Activated B cell treated with CpG ODN at 0.5 μM for 24 hours (primary cell): ENCODE measurements at regions of chr10 and their contacts with region 1.

Region 1: GRCh38 chr10:124741281-124741921 is 2.8 kb downstream of the FAM53B start:
- DNase-seq: peak; percentile 67
- ATAC-seq: peak; percentile 54
- H3K4me3 Mint-ChIP-seq: peak overlapping the region; percentile 97
- H3K27ac Mint-ChIP-seq: peak overlapping the region; percentile 97
- H3K4me1 Mint-ChIP-seq: peaks cover 75% of the 10 kb centered on the region
- H3K27me3 Mint-ChIP-seq: no peaks in the 10 kb centered on the region
- CTCF ChIP-seq: peak; percentile 41

Region 2: GRCh38 chr10:124403548-124403947 is 337.9 kb before region 1 on chr10:
- CTCF ChIA-PET with region 1: interaction called, 12 read pairs
- POLR2A ChIA-PET with region 1: no interaction called
- intact Hi-C with region 1: loop called (anchors 1 kb)
- DNase-seq: no peak
- ATAC-seq: peak; percentile 100
- H3K4me3 Mint-ChIP-seq: no peak overlapping the region
- H3K27ac Mint-ChIP-seq: peak overlapping the region; percentile 59
- H3K4me1 Mint-ChIP-seq: peaks cover 9% of the 10 kb centered on the region
- H3K27me3 Mint-ChIP-seq: no peaks in the 10 kb centered on the region
- CTCF ChIP-seq: no peak

Region 3: GRCh38 chr10:124539935-124540641 is 201.3 kb before region 1 on chr10:
- CTCF ChIA-PET with region 1: interaction called, 307 read pairs
- POLR2A ChIA-PET with region 1: interaction called, 134 read pairs
- intact Hi-C with region 1: loop called (anchors 1 kb)
- DNase-seq: peak; percentile 71
- ATAC-seq: peak; percentile 66
- H3K4me3 Mint-ChIP-seq: peak overlapping the region; percentile 50
- H3K27ac Mint-ChIP-seq: peak overlapping the region; percentile 82
- H3K4me1 Mint-ChIP-seq: peaks cover 89% of the 10 kb centered on the region
- H3K27me3 Mint-ChIP-seq: no peaks in the 10 kb centered on the region
- CTCF ChIP-seq: no peak

Region 4: GRCh38 chr10:124619195-124619594 is 122.2 kb before region 1 on chr10:
- CTCF ChIA-PET with region 1: interaction called, 24 read pairs
- POLR2A ChIA-PET with region 1: interaction called, 63 read pairs
- intact Hi-C with region 1: loop called (anchors 2 kb)
- DNase-seq: no peak
- ATAC-seq: peak; percentile 72
- H3K4me3 Mint-ChIP-seq: peak overlapping the region; percentile 69
- H3K27ac Mint-ChIP-seq: peak overlapping the region; percentile 96
- H3K4me1 Mint-ChIP-seq: peaks cover 99% of the 10 kb centered on the region
- H3K27me3 Mint-ChIP-seq: no peaks in the 10 kb centered on the region
- CTCF ChIP-seq: no peak

Region 5: GRCh38 chr10:124671486-124672075 is 69.8 kb before region 1 on chr10:
- CTCF ChIA-PET with region 1: interaction called, 12 read pairs
- POLR2A ChIA-PET with region 1: interaction called, 3 read pairs
- intact Hi-C with region 1: no loop called
- DNase-seq: no peak
- ATAC-seq: no peak
- H3K4me3 Mint-ChIP-seq: no peak overlapping the region
- H3K27ac Mint-ChIP-seq: peak overlapping the region; percentile 80
- H3K4me1 Mint-ChIP-seq: peaks cover 72% of the 10 kb centered on the region
- H3K27me3 Mint-ChIP-seq: no peaks in the 10 kb centered on the region
- CTCF ChIP-seq: no peak

Region 6: GRCh38 chr10:124719213-124719851 is 22.1 kb before region 1 on chr10:
- CTCF ChIA-PET with region 1: interaction called, 178 read pairs
- POLR2A ChIA-PET with region 1: interaction called, 312 read pairs
- intact Hi-C with region 1: loop called (anchors 1 kb)
- DNase-seq: no peak
- ATAC-seq: peak; percentile 43
- H3K4me3 Mint-ChIP-seq: peak overlapping the region; percentile 69
- H3K27ac Mint-ChIP-seq: peak overlapping the region; percentile 93
- H3K4me1 Mint-ChIP-seq: peaks cover 98% of the 10 kb centered on the region
- H3K27me3 Mint-ChIP-seq: no peaks in the 10 kb centered on the region
- CTCF ChIP-seq: no peak

Region 7: DNA sequence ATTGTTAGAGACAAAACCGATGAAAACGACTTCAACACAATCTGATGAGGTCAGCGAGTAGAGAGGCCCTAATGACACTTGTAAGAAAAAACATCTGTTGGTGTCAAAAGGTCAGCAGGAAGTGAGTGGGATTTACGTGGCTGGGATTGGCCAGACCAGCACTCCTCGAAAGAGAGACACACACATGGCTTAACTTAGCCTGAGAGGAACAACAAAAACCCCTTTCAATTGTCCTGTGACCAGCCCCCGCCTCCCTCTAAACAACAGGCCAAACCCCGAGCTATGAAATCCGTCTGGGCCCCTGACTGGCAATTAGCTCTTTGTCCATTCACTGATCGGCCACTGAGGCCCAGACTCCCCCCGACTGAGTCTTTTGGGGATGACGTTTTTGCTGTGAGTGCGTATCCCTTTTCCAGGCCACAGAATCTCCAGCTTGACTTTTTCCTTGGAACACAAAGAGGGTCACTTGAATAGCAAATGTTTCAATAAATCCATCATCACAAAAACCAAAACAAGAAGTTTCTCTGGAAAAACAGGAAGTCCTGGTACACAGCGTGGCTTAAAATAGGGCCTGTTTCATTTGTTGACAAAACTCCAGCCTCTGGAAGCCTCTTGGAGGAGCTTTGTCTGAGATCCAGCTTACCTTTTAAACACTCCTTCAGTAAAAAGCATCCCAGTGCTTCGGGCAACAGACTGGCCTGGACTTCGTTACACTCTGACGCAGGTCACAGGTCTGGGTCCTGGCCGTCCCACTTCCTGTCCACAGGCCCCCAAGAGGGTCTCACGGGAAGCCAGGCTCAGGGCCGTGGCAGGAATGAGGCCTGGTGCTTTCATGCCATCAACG is 316.0 kb after region 1 on chr10:
- CTCF ChIA-PET with region 1: no interaction called
- POLR2A ChIA-PET with region 1: no interaction called
- intact Hi-C with region 1: no loop called
- DNase-seq: no peak
- ATAC-seq: no peak
- H3K4me3 Mint-ChIP-seq: no peak overlapping the region
- H3K27ac Mint-ChIP-seq: no peak overlapping the region
- H3K4me1 Mint-ChIP-seq: peaks cover 17% of the 10 kb centered on the region
- H3K27me3 Mint-ChIP-seq: peaks cover 70% of the 10 kb centered on the region
- CTCF ChIP-seq: no peak

Region 8: DNA sequence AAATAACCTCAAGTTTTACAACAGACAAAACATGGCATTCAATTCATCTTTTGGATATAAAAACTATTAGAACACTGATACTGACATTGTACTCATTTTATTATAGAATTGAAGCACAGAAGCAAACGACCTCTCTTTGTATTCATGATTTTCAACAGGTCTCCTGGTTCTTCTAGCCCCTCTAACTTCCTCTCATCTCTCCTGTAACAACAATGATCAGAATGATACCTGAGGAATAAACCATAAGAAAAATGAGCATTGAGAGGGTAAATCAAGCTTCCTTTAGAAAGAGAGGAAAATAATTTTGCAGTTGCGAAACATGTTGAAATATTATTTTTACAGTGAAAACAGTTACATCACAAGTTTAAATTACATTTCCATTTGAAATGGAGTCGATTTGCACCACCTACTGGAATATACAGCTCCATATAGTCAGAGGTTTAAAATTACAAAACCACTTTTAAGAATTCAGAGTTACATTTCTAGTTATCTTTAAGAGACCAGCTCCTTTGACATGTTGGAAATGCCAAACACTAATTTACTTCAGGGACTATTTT is 959.0 kb after region 1 on chr10:
- CTCF ChIA-PET with region 1: no interaction called
- POLR2A ChIA-PET with region 1: no interaction called
- intact Hi-C with region 1: no loop called
- DNase-seq: no peak
- ATAC-seq: no peak
- H3K4me3 Mint-ChIP-seq: no peak overlapping the region
- H3K27ac Mint-ChIP-seq: no peak overlapping the region
- H3K4me1 Mint-ChIP-seq: no peaks in the 10 kb centered on the region
- H3K27me3 Mint-ChIP-seq: peaks cover 1% of the 10 kb centered on the region
- CTCF ChIP-seq: no peak